GM10248 (cell line): ENCODE measurements at regions of chr13 and their contacts with region 1.

Region 1: DNA sequence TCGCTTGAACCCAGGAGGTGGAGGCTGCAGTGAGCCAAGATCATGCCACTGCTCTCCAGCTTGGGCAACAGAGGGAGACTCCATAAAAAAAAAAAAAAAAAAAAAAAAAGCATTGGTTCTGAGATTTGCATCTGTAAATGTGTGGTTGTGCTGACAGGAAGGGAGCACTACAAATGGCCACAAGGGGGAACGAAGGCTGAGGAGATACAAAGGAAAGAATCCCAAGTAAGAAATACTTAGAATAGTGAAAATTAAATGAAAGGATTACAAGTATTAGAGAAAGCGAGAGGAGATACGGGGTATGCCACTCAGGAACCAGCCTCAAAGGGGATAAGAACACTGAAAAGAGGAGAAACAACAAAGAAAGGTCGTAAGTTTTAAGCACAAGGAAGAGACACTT is 284.9 kb downstream of the KLF12 start:
- DNase-seq: no peak
- CTCF ChIP-seq: peak; percentile 30

Region 2: DNA sequence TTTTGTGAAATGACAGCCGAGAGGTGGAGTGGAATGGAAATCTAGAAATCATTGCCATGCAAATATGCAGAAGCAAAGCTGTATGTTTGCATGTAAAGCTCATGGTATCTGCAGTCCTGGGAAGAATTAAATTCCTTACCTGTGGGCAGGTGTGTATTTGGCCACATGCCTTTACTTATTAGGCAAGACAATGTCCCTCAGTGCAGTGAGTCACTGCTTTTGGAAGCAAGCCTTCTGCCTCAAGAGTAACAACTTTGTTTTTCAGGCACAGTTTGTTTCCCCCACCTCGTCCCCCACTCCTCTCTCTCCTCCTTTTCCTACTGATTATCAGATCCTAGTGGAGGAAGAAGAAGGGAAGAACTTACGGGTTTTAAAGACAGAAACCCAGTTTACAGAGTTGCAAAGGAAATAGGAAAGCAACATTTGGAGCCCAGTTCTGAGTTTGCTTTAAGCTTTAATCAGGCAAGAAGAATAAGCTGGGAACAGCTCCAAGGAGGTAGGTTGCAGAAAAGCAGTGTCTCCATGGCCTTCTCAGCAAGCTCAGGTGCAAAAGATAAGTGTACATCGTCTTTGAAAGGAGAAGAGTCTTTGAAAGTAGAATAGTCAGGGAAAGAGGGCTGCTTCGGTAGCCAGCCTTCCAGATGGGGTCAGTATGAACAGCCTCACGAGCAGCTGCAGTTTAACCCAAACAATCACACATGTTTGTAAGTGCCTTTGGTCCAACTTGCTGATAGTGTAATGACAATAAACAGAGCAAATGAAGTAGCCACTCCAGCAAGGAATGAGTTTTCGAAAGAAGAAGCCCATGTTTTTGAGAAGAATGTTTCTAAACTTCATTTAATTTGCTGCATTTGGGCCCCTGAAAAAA is 600.3 kb before region 1 on chr13:
- CTCF ChIA-PET with region 1: no interaction called
- POLR2A ChIA-PET with region 1: no interaction called
- DNase-seq: no peak
- CTCF ChIP-seq: no peak

Region 3: GRCh38 chr13:73835138-73835721 is 14.1 kb before region 1 on chr13:
- CTCF ChIA-PET with region 1: interaction called, 17 read pairs
- POLR2A ChIA-PET with region 1: no interaction called
- DNase-seq: peak; percentile 42
- CTCF ChIP-seq: peak; percentile 39